ENCODE measurements at regions of chr18 and their contacts with region 1.

Region 1: DNA sequence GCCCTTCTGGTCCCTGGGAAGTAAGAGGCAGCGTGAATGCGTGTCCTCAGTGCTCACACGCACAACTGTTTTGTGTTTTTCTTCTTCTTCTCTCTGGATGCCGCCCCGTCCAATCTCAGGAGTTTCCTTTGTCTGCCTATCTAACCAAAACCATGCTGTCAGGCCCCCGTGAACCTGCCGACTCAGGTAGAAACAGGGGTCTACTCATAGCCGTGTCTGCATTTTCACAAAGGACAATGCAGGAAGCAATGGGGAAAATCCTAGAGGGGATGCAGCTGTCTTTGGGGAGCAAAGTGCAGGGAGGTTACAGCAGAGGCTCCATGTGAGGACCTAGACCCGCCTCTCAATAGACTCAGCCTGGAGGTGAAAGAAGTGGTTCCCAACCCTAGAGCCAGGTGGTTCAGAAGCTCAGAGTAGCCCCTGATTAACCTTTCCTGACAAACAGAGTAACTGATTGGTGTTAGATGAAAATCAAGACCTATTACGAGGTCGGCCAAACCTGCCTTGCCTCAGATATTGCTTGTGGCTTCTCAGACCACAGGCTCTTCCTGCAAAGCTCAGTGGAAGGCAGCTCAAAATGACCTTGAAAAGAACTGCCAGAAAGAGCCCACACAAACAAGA is 49.3 kb downstream of the CD226 start:
- DNase-seq: peak; percentile 81
- H3K4me3 Mint-ChIP-seq: peak overlapping the region; percentile 84
- H3K27ac Mint-ChIP-seq: peak overlapping the region; percentile 92
- H3K4me1 Mint-ChIP-seq: peaks cover 60% of the 10 kb centered on the region
- H3K27me3 Mint-ChIP-seq: no peaks in the 10 kb centered on the region

Region 2: DNA sequence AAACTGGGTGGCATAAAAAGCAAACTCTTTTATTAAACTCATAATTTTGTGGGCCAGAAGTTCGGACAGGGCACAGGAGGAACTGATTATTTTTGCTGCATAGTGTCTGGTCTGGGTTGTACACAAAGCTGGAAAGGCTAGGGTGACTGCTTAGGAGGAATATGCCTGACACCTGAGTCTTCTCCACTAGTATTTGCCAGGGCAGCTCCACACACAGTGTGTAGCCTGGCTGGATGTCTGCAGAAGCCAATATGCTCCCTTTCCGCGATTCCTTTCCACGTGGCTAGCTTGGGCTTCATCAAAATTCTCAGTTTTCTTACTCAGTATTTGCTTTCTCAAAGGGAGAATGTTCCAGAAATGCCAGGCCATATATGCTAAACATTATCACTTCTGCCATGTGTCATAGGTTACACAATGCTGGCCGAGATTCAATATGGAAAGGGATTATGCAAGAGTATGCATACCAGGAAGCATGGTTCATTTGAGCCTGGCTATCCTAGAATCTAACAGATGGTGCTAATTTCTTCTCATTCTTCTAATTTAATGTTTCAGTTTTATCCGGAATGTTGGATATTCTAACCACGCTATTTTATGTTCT is 640.4 kb before region 1 on chr18:
- intact Hi-C with region 1: no loop called
- DNase-seq: no peak
- H3K4me3 Mint-ChIP-seq: no peak overlapping the region
- H3K27ac Mint-ChIP-seq: no peak overlapping the region
- H3K4me1 Mint-ChIP-seq: no peaks in the 10 kb centered on the region
- H3K27me3 Mint-ChIP-seq: no peaks in the 10 kb centered on the region

Region 3: DNA sequence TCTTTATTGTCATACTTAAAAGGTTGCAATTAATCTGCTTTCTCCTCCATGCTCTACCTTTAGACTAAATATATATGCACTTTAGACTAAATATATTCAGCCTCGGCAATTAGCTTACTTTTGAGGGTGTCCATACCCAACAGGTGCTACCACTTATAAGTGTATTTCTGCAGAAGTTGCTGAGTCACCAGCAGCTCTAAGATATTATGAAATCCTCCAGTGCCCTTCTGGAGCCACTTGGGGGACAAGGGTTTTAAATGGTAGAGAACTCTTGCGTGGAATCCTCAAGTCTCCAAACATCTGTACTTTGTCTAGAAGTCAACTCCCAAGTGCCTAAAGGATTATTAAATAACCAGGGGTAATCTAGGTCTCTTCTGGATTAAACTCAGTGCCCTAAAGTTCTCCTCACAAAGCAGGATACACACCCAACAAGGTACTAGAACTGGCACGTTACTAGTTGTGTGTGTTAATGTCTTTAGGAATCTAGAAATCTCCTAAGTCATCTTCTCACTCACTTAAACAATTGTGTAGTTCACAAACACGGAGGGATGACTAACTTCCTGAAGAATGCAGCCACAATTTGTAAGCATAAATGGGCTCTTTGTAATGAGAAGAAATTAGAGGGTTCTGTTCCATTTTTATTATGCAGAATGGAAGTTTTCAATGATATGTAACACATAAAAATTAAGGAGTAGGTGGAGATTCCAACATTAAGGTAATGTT is 110.4 kb before region 1 on chr18:
- intact Hi-C with region 1: no loop called
- DNase-seq: no peak
- H3K4me3 Mint-ChIP-seq: no peak overlapping the region
- H3K27ac Mint-ChIP-seq: no peak overlapping the region
- H3K4me1 Mint-ChIP-seq: peaks cover 2% of the 10 kb centered on the region
- H3K27me3 Mint-ChIP-seq: no peaks in the 10 kb centered on the region

Region 4: GRCh38 chr18:69885841-69886531 is 12.4 kb before region 1 on chr18:
- intact Hi-C with region 1: loop called (anchors 1 kb)
- DNase-seq: peak; percentile 84
- H3K4me3 Mint-ChIP-seq: peak overlapping the region; percentile 72
- H3K27ac Mint-ChIP-seq: peak overlapping the region; percentile 99
- H3K4me1 Mint-ChIP-seq: peaks cover 63% of the 10 kb centered on the region
- H3K27me3 Mint-ChIP-seq: no peaks in the 10 kb centered on the region

Region 5: GRCh38 chr18:69935319-69936190 is 37.2 kb after region 1 on chr18:
- intact Hi-C with region 1: loop called (anchors 1 kb)
- DNase-seq: peak; percentile 93
- H3K4me3 Mint-ChIP-seq: no peak overlapping the region
- H3K27ac Mint-ChIP-seq: no peak overlapping the region
- H3K4me1 Mint-ChIP-seq: peaks cover 32% of the 10 kb centered on the region
- H3K27me3 Mint-ChIP-seq: peaks cover 2% of the 10 kb centered on the region

Region 6: GRCh38 chr18:69958422-69958821 is 60.1 kb after region 1 on chr18:
- intact Hi-C with region 1: loop called (anchors 1 kb)
- DNase-seq: peak; percentile 73
- H3K4me3 Mint-ChIP-seq: no peak overlapping the region
- H3K27ac Mint-ChIP-seq: no peak overlapping the region
- H3K4me1 Mint-ChIP-seq: peaks cover 24% of the 10 kb centered on the region
- H3K27me3 Mint-ChIP-seq: no peaks in the 10 kb centered on the region

Region 7: GRCh38 chr18:70195852-70196434 is 297.6 kb after region 1 on chr18:
- intact Hi-C with region 1: loop called (anchors 10 kb)
- DNase-seq: peak; percentile 72
- H3K4me3 Mint-ChIP-seq: no peak overlapping the region
- H3K27ac Mint-ChIP-seq: no peak overlapping the region
- H3K4me1 Mint-ChIP-seq: peaks cover 17% of the 10 kb centered on the region
- H3K27me3 Mint-ChIP-seq: no peaks in the 10 kb centered on the region

Measured in activated CD4-positive, alpha-beta T cell treated with anti-CD3 and anti-CD28 coated beads, Interleukin-2, amount 10 ng/mL, durations not matched to agents 24 days and 14 days (primary cell).